Activated CD8-positive, alpha-beta T cell treated with anti-CD3 and anti-CD28 coated beads, Interleukin-2, amount 10 ng/mL, durations not matched to agents 7 days and 5 days (primary cell): ENCODE measurements at regions of chr10 and their contacts with region 1.

Region 1: GRCh38 chr10:104353325-104354048 is at the start of gene CFAP58:
- DNase-seq: peak; percentile 94
- ATAC-seq: peak; percentile 96
- H3K4me3 Mint-ChIP-seq: no peak within 1 kb of the TSS
- H3K27ac Mint-ChIP-seq: peak within 1 kb of the TSS; percentile 40
- H3K4me1 Mint-ChIP-seq: no peaks in the 10 kb centered on the region
- H3K27me3 Mint-ChIP-seq: peaks cover 2% of the 10 kb centered on the region
- total RNA-seq, gene CFAP58: 0.24 to 0.47 TPM

Region 2: GRCh38 chr10:104231784-104232612 is 121.5 kb before region 1 on chr10 and contains the start of gene CFAP43:
- CTCF ChIA-PET with region 1: no interaction called
- POLR2A ChIA-PET with region 1: no interaction called
- DNase-seq: peak; percentile 99
- ATAC-seq: peak; percentile 100
- H3K4me3 Mint-ChIP-seq: peak within 1 kb of the TSS; percentile 87
- H3K27ac Mint-ChIP-seq: peak within 1 kb of the TSS; percentile 43
- H3K4me1 Mint-ChIP-seq: peaks cover 14% of the 10 kb centered on the region
- H3K27me3 Mint-ChIP-seq: peaks cover 22% of the 10 kb centered on the region
- total RNA-seq, gene CFAP43: 0.18 TPM in 1 of 2 experiments, not detected in the other

Region 3: DNA sequence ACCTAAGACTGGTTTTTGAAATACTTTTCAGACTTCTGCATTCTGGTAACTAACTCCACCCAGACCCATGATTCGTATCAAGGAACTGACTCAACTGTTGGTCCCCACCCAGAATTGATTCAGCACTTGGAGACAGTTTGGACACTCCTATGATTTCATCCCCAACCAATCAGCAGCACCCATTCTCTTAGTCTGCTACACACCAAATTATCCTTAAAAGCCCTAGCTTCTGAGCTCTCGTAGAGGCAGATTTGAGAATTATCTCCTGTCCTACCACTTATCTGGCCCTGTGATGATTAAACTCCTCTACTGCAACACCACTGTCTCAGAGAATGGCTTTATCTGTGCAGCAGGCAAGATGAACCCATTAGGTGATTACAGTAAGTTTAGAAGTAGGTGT is 106.5 kb before region 1 on chr10:
- CTCF ChIA-PET with region 1: no interaction called
- POLR2A ChIA-PET with region 1: no interaction called
- DNase-seq: no peak
- ATAC-seq: peak; percentile 31
- H3K4me3 Mint-ChIP-seq: no peak overlapping the region
- H3K27ac Mint-ChIP-seq: peak overlapping the region; percentile 58
- H3K4me1 Mint-ChIP-seq: peaks cover 16% of the 10 kb centered on the region
- H3K27me3 Mint-ChIP-seq: peaks cover 12% of the 10 kb centered on the region

Region 4: DNA sequence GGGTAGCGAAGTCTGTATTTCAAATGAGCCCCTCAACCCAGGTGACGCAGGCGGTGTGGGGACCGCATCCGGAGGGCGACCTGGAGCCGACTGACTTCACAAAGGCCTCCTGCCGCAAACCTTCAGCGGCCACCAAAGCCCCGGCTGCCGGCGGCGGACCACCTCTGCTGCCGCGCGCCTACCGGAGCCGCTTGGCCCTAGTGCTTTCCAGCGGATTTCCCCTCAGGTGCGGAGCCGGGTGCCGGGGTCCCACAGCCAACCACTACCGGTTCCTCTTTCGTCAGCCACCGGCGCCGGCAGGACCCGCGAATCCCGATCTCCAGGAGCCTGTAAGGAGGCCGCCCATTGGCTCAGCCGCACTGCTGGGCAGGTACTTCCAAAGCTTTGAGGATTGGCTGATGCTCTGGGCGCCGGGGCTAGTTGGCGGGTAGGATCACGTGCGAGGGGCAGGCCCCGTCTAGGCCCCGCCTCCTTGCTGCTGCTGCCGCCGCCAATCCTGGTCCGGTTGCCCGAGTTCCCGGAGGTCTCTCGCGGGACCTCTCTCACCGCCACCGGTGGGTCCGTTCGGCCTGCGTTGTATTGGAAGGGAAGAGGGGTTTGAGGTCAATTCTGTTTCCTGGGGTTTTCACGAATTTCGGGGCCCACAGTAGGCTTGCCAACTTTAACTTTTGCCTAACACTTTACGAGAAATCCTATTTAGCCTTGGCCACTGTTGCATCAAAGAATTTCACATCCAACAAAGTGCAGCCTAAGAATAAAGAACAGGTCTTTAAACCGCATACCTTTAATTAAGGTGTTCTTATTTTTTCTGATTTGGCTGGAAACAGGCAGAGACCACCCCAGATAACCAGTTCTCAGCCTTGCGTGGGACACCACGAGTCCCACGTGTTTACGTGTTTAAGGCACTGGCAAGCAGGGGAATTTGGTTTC is 84.5 kb before region 1 on chr10 and contains the start of gene GSTO2:
- CTCF ChIA-PET with region 1: interaction called, 152 read pairs
- POLR2A ChIA-PET with region 1: interaction called, 3 read pairs
- DNase-seq: peak; percentile 99
- ATAC-seq: peak; percentile 99
- H3K4me3 Mint-ChIP-seq: peak within 1 kb of the TSS; percentile 87
- H3K27ac Mint-ChIP-seq: peak within 1 kb of the TSS; percentile 86
- H3K4me1 Mint-ChIP-seq: peaks cover 48% of the 10 kb centered on the region
- H3K27me3 Mint-ChIP-seq: peaks cover under 1% of the 10 kb centered on the region
- total RNA-seq, gene GSTO2: 0.94 to 1.2 TPM

Region 5: GRCh38 chr10:104284846-104285245 is 68.6 kb before region 1 on chr10:
- CTCF ChIA-PET with region 1: interaction called, 368 read pairs
- POLR2A ChIA-PET with region 1: no interaction called
- DNase-seq: no peak
- ATAC-seq: no peak
- H3K4me3 Mint-ChIP-seq: no peak overlapping the region
- H3K27ac Mint-ChIP-seq: no peak overlapping the region
- H3K4me1 Mint-ChIP-seq: no peaks in the 10 kb centered on the region
- H3K27me3 Mint-ChIP-seq: peaks cover 24% of the 10 kb centered on the region

Region 6: GRCh38 chr10:104300736-104301292 is 52.7 kb before region 1 on chr10:
- CTCF ChIA-PET with region 1: interaction called, 368 read pairs
- POLR2A ChIA-PET with region 1: no interaction called
- DNase-seq: peak; percentile 53
- ATAC-seq: peak; percentile 40
- H3K4me3 Mint-ChIP-seq: no peak overlapping the region
- H3K27ac Mint-ChIP-seq: peak overlapping the region; percentile 84
- H3K4me1 Mint-ChIP-seq: peaks cover 43% of the 10 kb centered on the region
- H3K27me3 Mint-ChIP-seq: peaks cover 2% of the 10 kb centered on the region

Region 7: DNA sequence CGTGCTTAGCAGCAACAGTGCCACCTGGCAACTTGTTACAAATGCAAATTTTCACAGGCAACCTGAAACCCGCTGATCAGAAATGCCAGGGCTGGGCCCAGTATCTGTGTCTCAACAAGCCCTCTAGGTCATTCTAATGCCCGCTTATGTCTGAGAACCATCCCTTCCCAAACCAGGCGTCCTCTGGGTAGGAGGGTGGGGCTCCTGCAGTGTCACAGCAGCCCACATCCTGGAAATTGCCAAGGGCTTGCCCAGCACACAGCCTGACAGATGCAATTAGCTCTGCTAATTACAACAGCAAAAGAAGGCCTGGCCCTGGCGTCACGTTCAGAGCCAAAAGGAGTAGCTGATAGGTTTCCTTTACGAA is 31.1 kb before region 1 on chr10:
- CTCF ChIA-PET with region 1: interaction called, 53 read pairs
- POLR2A ChIA-PET with region 1: interaction called, 3 read pairs
- DNase-seq: peak; percentile 65
- ATAC-seq: peak; percentile 54
- H3K4me3 Mint-ChIP-seq: peak overlapping the region; percentile 61
- H3K27ac Mint-ChIP-seq: peak overlapping the region; percentile 91
- H3K4me1 Mint-ChIP-seq: peaks cover 93% of the 10 kb centered on the region
- H3K27me3 Mint-ChIP-seq: no peaks in the 10 kb centered on the region

Region 8: GRCh38 chr10:104337974-104338735 is 15.3 kb before region 1 on chr10 and contains the start of gene ITPRIP:
- CTCF ChIA-PET with region 1: interaction called, 23 read pairs
- POLR2A ChIA-PET with region 1: interaction called, 33 read pairs
- DNase-seq: peak; percentile 82
- ATAC-seq: peak; percentile 79
- H3K4me3 Mint-ChIP-seq: peak within 1 kb of the TSS; percentile 94
- H3K27ac Mint-ChIP-seq: peak within 1 kb of the TSS; percentile 100
- H3K4me1 Mint-ChIP-seq: peaks cover 49% of the 10 kb centered on the region
- H3K27me3 Mint-ChIP-seq: peaks cover 10% of the 10 kb centered on the region
- total RNA-seq, gene ITPRIP: 26.6 to 27.1 TPM